Sigmoid colon (tissue), 7 donors: ENCODE measurements at regions of chr3 and their contacts with region 1.

Region 1: GRCh38 chr3:58532794-58533220 is 4.2 kb downstream of the ACOX2 start:
- DNase-seq: peak; percentile 75
- H3K4me3 ChIP-seq: no peak overlapping the region
- H3K27ac ChIP-seq: no peak overlapping the region
- H3K4me1 ChIP-seq: peaks cover 0 to 42% (median 37%) of the 10 kb centered on the region in 4 donors
- H3K27me3 ChIP-seq: no peaks in the 10 kb centered on the region
- CTCF ChIP-seq: peak; percentile 61 to 86 (median 84)
- EP300 ChIP-seq: no peak
- POLR2A ChIP-seq: no peak

Region 2: GRCh38 chr3:58249358-58250092 is 283.3 kb before region 1 on chr3:
- intact Hi-C with region 1: no loop called
- DNase-seq: no peak
- H3K4me3 ChIP-seq: no peak overlapping the region
- H3K27ac ChIP-seq: peak overlapping the region in 1 of 4 donors; percentile 36
- H3K4me1 ChIP-seq: peaks cover 0 to 77% (median 63%) of the 10 kb centered on the region in 4 donors
- H3K27me3 ChIP-seq: no peaks in the 10 kb centered on the region
- CTCF ChIP-seq: no peak
- EP300 ChIP-seq: no peak
- POLR2A ChIP-seq: no peak

Region 3: GRCh38 chr3:58305882-58306711 is 226.7 kb before region 1 on chr3 and contains the starts of genes HTD2 and RPP14:
- intact Hi-C with region 1: loop called (anchors 5 kb)
- DNase-seq: peak; percentile 99
- H3K4me3 ChIP-seq: peak within 1 kb of the TSS; percentile 65 to 96 (median 77)
- H3K27ac ChIP-seq: peak within 1 kb of the TSS; percentile 89 to 98 (median 96)
- H3K4me1 ChIP-seq: peaks cover 0 to 32% (median 30%) of the 10 kb centered on the region in 4 donors
- H3K27me3 ChIP-seq: no peaks in the 10 kb centered on the region
- CTCF ChIP-seq: peak; percentile 90 to 98 (median 92)
- EP300 ChIP-seq: peak in 1 of 4 donors; percentile 31
- POLR2A ChIP-seq: peak; percentile 60 to 62
- total RNA-seq, gene HTD2: 6.9 to 20.8 (median 12.5) TPM
- total RNA-seq, gene RPP14: 10.8 to 16.7 (median 13.8) TPM

Region 4: GRCh38 chr3:58323529-58324390 is 209.0 kb before region 1 on chr3:
- intact Hi-C with region 1: loop called (anchors 2 kb)
- DNase-seq: no peak
- H3K4me3 ChIP-seq: no peak overlapping the region
- H3K27ac ChIP-seq: no peak overlapping the region
- H3K4me1 ChIP-seq: peaks cover 0 to 14% (median 11%) of the 10 kb centered on the region in 4 donors
- H3K27me3 ChIP-seq: no peaks in the 10 kb centered on the region
- CTCF ChIP-seq: no peak
- EP300 ChIP-seq: no peak
- POLR2A ChIP-seq: no peak

Region 5: GRCh38 chr3:58463181-58463941 is 69.4 kb before region 1 on chr3:
- intact Hi-C with region 1: loop called (anchors 1 kb)
- DNase-seq: peak; percentile 82
- H3K4me3 ChIP-seq: peak overlapping the region in 3 of 4 donors; percentile 0 to 37 (median 11)
- H3K27ac ChIP-seq: no peak overlapping the region
- H3K4me1 ChIP-seq: peaks cover 0 to 13% (median 7%) of the 10 kb centered on the region in 4 donors
- H3K27me3 ChIP-seq: no peaks in the 10 kb centered on the region
- CTCF ChIP-seq: peak in 3 of 4 experiments; percentile 36 to 77 (median 72)
- EP300 ChIP-seq: no peak
- POLR2A ChIP-seq: no peak

Region 6: DNA sequence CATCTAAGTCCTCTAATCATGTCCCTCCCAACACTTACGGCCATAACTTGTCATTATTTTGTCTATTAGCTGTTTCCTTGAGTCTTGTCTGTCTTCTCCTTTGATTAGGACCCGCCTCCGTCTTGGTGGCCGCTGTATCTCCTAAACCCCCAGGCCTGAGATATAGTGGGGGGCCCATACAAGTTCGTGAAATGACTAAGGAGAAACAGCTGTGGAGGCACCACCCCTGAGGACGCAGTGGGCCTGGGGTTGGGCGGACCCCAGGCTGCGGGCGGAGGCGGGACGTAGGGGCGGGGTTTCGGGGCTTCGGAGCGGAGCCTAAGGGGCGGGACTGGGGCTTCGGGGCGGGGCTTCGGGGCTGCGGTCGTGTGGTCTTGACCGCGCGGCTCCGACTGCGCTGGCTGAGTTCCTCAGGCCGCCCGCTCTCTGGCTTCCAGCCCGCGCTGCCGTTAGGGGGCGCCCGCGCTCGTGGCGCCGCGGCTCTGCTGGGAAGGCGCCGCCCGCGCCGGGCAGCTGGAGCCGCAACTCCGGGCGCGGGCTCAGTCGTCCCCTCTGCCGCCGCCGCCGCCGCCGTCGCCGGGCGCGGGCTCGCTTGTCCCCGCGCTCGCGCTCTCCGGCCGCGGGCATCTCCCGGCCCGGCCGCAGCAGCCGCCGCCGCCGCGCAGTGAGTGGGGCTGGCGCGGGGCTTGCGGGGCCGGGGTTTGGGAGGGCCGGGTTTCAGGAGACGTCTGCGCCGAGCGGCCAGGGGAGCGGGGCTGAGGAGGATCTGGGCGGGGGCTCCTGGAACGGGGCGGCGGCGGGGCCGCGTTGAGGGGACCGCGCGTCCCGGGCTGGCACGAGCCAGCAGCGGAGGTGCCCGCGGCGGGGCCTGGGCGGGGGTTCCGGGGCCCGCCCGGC is 41.1 kb before region 1 on chr3 and contains the start of gene KCTD6:
- intact Hi-C with region 1: loop called (anchors 2 kb)
- DNase-seq: peak; percentile 95
- H3K4me3 ChIP-seq: peak within 1 kb of the TSS; percentile 77 to 96 (median 87)
- H3K27ac ChIP-seq: peak within 1 kb of the TSS; percentile 83 to 95 (median 87)
- H3K4me1 ChIP-seq: peaks cover 0 to 57% (median 38%) of the 10 kb centered on the region in 4 donors
- H3K27me3 ChIP-seq: no peaks in the 10 kb centered on the region
- CTCF ChIP-seq: peak in 2 of 4 experiments; percentile 28 to 63
- EP300 ChIP-seq: no peak
- POLR2A ChIP-seq: no peak
- total RNA-seq, gene KCTD6: 11.0 to 25.3 (median 17.7) TPM

Region 7: DNA sequence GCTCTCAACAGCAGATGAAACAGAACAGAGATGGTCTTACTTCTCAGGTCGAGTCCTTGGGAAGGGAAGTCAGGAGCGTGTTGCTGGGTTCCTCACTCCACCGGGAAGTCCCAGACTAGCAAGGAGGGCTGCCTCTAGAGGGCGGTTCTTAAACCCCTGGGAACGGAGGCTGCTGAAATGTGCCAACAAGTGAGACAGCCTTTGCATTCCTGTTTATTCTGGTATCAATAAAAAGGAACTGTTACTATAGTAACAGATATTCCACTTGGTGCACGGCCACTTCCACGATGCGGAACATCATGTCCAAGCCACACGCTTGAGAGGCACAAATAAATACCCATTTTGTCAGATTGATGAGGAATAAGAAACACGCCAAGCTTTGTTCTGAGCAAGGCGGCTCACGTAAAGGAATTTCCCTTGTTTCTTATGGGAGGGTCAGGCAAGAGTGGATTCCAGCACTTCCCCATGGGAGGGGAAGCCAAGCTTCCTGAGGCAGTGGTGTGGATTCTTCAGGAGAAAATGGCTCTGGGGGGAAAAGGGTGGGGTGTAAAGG is 44.5 kb after region 1 on chr3 and contains the start of gene FAM107A:
- intact Hi-C with region 1: no loop called
- DNase-seq: peak; percentile 79
- H3K4me3 ChIP-seq: peak within 1 kb of the TSS; percentile 9 to 37 (median 35)
- H3K27ac ChIP-seq: peak within 1 kb of the TSS; percentile 59 to 73 (median 68)
- H3K4me1 ChIP-seq: peaks cover 0 to 14% (median 9%) of the 10 kb centered on the region in 4 donors
- H3K27me3 ChIP-seq: no peaks in the 10 kb centered on the region
- CTCF ChIP-seq: no peak
- EP300 ChIP-seq: peak in 3 of 4 donors; percentile 48 to 90 (median 84)
- POLR2A ChIP-seq: peak in 1 of 2 donors; percentile 12
- total RNA-seq, gene FAM107A: 26.3 to 56.7 (median 33.9) TPM

Region 8: GRCh38 chr3:58899159-58899952 is 366.5 kb after region 1 on chr3:
- intact Hi-C with region 1: no loop called
- DNase-seq: peak; percentile 64
- H3K4me3 ChIP-seq: no peak overlapping the region
- H3K27ac ChIP-seq: no peak overlapping the region
- H3K4me1 ChIP-seq: no peaks in the 10 kb centered on the region
- H3K27me3 ChIP-seq: no peaks in the 10 kb centered on the region
- CTCF ChIP-seq: no peak
- EP300 ChIP-seq: no peak
- POLR2A ChIP-seq: no peak